Activated CD4-positive, alpha-beta memory T cell treated with anti-CD3 and anti-CD28 coated beads for 36 hours (primary cell): ENCODE measurements at regions of chr9 and their contacts with region 1.

Region 1: DNA sequence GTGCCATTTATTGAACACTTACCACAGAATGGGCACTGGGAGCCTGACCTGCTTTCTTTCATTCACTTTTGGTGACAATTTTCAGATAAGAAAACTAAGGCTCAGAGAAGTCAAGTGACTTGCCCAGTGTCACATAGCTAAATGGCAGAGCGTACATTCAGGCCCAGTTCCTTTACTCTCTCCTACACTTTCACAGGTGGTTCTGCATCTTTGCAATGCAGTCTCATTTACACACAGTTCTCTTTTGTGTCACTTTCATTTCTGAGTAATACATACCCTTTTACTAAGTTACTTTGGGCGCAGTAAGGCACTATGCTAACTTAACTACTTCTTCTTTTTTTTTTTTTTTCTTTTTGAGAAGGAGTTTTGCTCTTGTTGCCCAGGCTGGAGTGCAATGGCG is 8.3 kb downstream of the NFIL3 start:
- DNase-seq: peak; percentile 49
- H3K4me3 Mint-ChIP-seq: peak overlapping the region; percentile 26
- H3K27ac Mint-ChIP-seq: peak overlapping the region; percentile 86
- H3K4me1 Mint-ChIP-seq: peaks cover 80% of the 10 kb centered on the region
- H3K27me3 Mint-ChIP-seq: peaks cover 5% of the 10 kb centered on the region

Region 2: DNA sequence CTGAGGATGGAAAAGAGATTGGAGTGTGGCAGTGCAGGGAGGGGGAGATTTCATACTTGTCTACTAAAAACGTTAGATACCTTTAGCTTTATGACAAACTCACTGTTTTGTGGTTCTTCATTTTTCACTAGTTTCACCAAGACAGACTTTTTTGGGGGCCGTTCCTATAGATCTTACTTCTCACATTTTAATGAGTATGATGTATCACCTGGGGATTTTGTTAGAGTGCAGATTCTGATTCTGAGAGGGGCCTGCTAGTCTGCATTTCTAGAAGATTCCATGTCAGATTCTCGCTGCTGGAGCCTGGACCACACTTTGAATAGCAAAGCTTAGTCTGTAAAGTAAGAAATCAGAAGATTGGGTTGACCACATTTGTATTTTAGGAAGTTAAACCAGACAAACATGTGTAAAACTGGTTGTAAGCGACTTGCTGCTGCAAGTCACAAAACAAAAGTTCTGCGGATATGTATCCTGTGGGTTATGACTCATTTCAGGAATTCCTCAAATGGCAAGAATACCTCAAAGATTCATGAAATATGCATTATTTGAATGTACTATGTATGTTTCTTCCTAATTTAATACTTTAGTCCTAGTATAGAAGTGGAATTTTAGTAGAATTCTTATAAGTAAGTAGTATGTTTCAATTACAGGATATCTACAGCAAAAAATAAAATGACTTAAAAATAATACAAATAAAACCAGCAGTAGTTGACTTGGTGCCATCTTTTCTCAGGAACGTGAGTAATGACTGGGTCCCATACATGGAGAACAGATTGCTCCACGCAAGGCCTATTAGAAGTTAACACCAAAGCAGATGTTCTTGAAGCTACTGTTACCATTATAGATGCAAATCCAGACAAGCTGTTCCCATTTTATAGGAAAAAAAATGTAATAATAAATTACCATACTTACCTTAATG is 19.5 kb before region 1 on chr9:
- CTCF ChIA-PET with region 1: no interaction called
- POLR2A ChIA-PET with region 1: interaction called, 6 read pairs
- intact Hi-C with region 1: loop called (anchors 1 kb)
- DNase-seq: peak; percentile 44
- H3K4me3 Mint-ChIP-seq: peak overlapping the region; percentile 19
- H3K27ac Mint-ChIP-seq: peak overlapping the region; percentile 78
- H3K4me1 Mint-ChIP-seq: peaks cover 19% of the 10 kb centered on the region
- H3K27me3 Mint-ChIP-seq: peaks cover 15% of the 10 kb centered on the region

Region 3: GRCh38 chr9:91522481-91522880 is 107.2 kb after region 1 on chr9:
- CTCF ChIA-PET with region 1: no interaction called
- POLR2A ChIA-PET with region 1: no interaction called
- intact Hi-C with region 1: no loop called
- DNase-seq: no peak
- H3K4me3 Mint-ChIP-seq: no peak overlapping the region
- H3K27ac Mint-ChIP-seq: no peak overlapping the region
- H3K4me1 Mint-ChIP-seq: no peaks in the 10 kb centered on the region
- H3K27me3 Mint-ChIP-seq: peaks cover 26% of the 10 kb centered on the region